ENCODE measurements at regions of chr2 and their contacts with region 1.

Region 1: GRCh38 chr2:109238580-109238979 is 109.6 kb downstream of the SH3RF3 start:
- DNase-seq: peak; percentile 55 to 87
- H3K4me3 ChIP-seq: no peak overlapping the region
- H3K27ac ChIP-seq: peak overlapping the region; percentile 86 to 95
- H3K4me1 ChIP-seq: peaks cover 25 to 78% of the 10 kb centered on the region in 2 donors
- H3K27me3 ChIP-seq: no peaks in the 10 kb centered on the region
- CTCF ChIP-seq: no peak

Region 2: DNA sequence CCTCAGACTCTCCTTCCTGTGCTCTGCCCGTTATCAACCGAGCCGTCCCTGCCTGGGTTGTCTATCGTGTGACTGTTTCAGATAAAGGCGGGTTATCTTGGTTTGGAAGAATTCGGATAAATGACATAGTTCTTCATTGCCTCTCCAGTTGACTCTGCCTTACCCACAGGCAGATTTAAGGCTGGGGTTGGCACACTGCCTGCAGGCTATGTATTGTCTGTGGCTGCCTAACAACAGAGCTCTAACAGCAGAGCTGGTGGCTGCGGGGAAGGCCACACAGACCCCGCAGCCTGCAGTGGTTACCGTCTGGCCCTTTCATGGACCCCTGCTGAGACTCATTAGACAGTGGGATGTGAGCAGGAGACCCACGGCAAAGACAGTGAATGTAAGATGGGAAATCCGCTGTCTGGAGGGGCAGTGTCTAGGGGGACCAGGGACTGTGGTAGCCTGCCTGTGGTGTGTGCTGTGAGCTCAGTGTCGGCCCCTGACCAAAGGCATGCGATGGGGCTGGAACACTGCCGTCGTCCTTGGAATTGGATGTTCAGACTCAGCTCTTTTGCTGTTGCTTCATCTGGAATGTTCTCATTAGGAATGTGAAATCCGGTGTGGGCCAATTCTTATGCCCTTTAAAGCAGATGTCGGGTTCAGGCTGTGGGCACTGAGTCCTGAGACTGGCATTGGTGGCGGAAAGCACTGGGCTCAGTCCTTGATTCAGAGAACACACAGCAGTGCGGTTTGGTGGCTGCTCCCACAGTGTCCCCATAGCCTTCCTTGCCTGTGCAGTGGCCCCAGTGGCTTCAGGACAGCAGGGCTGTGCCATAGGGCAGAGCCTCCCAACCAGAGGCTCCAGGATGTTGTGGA is 65.0 kb before region 1 on chr2:
- intact Hi-C with region 1: loop called (anchors 2 kb)
- DNase-seq: peak; percentile 75 to 97
- H3K4me3 ChIP-seq: peak overlapping the region; percentile 6 to 31
- H3K27ac ChIP-seq: peak overlapping the region; percentile 95 to 98
- H3K4me1 ChIP-seq: peaks cover 27 to 70% of the 10 kb centered on the region in 2 donors
- H3K27me3 ChIP-seq: no peaks in the 10 kb centered on the region
- CTCF ChIP-seq: no peak

Region 3: GRCh38 chr2:109201465-109202327 is 36.9 kb before region 1 on chr2:
- intact Hi-C with region 1: loop called (anchors 5 kb)
- DNase-seq: peak in 1 of 2 donors; percentile 81
- H3K4me3 ChIP-seq: peak overlapping the region in 1 of 2 donors; percentile 42
- H3K27ac ChIP-seq: peak overlapping the region; percentile 75 to 81
- H3K4me1 ChIP-seq: peaks cover 20 to 34% of the 10 kb centered on the region in 2 donors
- H3K27me3 ChIP-seq: no peaks in the 10 kb centered on the region
- CTCF ChIP-seq: peak; percentile 30 to 51 (median 41)

Region 4: GRCh38 chr2:109510136-109511028 is 271.8 kb after region 1 on chr2:
- intact Hi-C with region 1: loop called (anchors 5 kb)
- DNase-seq: peak; percentile 37 to 92
- H3K4me3 ChIP-seq: no peak overlapping the region
- H3K27ac ChIP-seq: no peak overlapping the region
- H3K4me1 ChIP-seq: peaks cover 7 to 15% of the 10 kb centered on the region in 2 donors
- H3K27me3 ChIP-seq: no peaks in the 10 kb centered on the region
- CTCF ChIP-seq: peak; percentile 89 to 94 (median 93)